Naive thymus-derived CD8-positive, alpha-beta T cell (primary cell): ENCODE measurements at regions of chr10 and their contacts with region 1.

Region 1: GRCh38 chr10:102450194-102450938 is 977 bp downstream of the C10orf95 start:
- DNase-seq: peak; percentile 85 to 95 (median 88)
- ATAC-seq: peak; percentile 86 to 87
- H3K4me3 Mint-ChIP-seq: peak overlapping the region; percentile 89 to 97 (median 93)
- H3K27ac Mint-ChIP-seq: peak overlapping the region; percentile 79 to 98 (median 95)
- H3K4me1 Mint-ChIP-seq: peaks cover 10 to 32% (median 28%) of the 10 kb centered on the region in 4 donors
- H3K27me3 Mint-ChIP-seq: no peaks in the 10 kb centered on the region

Region 2: GRCh38 chr10:102394079-102394800 is 56.1 kb before region 1 on chr10:
- POLR2A ChIA-PET with region 1: interaction called, 81 read pairs
- DNase-seq: peak; percentile 96 to 100 (median 99)
- ATAC-seq: peak; percentile 77 to 80
- H3K4me3 Mint-ChIP-seq: peak overlapping the region; percentile 93 to 98 (median 96)
- H3K27ac Mint-ChIP-seq: peak overlapping the region; percentile 92 to 100 (median 100)
- H3K4me1 Mint-ChIP-seq: peaks cover 13 to 46% (median 41%) of the 10 kb centered on the region in 4 donors
- H3K27me3 Mint-ChIP-seq: no peaks in the 10 kb centered on the region

Region 3: GRCh38 chr10:102420810-102421644 is 29.3 kb before region 1 on chr10 and contains the start of gene FBXL15:
- POLR2A ChIA-PET with region 1: interaction called, 111 read pairs
- DNase-seq: peak; percentile 77 to 97 (median 90)
- ATAC-seq: peak; percentile 71 to 76
- H3K4me3 Mint-ChIP-seq: peak within 1 kb of the TSS; percentile 93 to 100 (median 98)
- H3K27ac Mint-ChIP-seq: peak within 1 kb of the TSS; percentile 92 to 97 (median 95)
- H3K4me1 Mint-ChIP-seq: peaks cover 23 to 48% (median 46%) of the 10 kb centered on the region in 4 donors
- H3K27me3 Mint-ChIP-seq: peaks cover 11 to 25% (median 16%) of the 10 kb centered on the region in 5 donors
- polyA plus RNA-seq, gene FBXL15: 26.8 to 35.5 (median 28.5) TPM

Region 4: GRCh38 chr10:102461187-102462054 is 11.1 kb after region 1 on chr10:
- POLR2A ChIA-PET with region 1: interaction called, 109 read pairs
- DNase-seq: peak; percentile 85 to 95 (median 90)
- ATAC-seq: peak; percentile 99 to 100
- H3K4me3 Mint-ChIP-seq: peak overlapping the region; percentile 86 to 98 (median 92)
- H3K27ac Mint-ChIP-seq: peak overlapping the region; percentile 73 to 93 (median 86)
- H3K4me1 Mint-ChIP-seq: peaks cover 28 to 44% (median 32%) of the 10 kb centered on the region in 4 donors
- H3K27me3 Mint-ChIP-seq: peaks cover 0 to 1% (median 0%) of the 10 kb centered on the region in 5 donors

Region 5: DNA sequence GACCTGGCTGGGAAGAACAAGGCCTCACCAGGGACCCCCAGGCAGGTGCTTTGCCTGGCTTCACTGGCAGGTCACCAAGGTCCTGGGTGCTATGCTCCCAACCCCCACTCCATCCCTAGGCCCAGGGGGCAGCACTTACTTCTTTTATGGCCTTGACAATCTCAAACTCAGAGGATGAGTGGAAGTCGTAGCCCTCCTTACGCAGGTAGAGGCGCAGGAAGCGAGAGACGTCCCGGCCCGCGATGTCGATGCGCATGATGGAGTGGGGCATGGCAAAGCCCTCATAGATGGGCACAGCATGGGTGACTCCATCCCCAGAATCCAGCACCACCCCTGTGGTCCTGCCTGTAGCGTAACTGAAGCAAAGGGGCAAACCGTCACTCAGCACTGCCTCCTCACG is 33.7 kb after region 1 on chr10:
- POLR2A ChIA-PET with region 1: interaction called, 18 read pairs
- DNase-seq: no peak
- ATAC-seq: no peak
- H3K4me3 Mint-ChIP-seq: no peak overlapping the region
- H3K27ac Mint-ChIP-seq: no peak overlapping the region
- H3K4me1 Mint-ChIP-seq: peaks cover 1 to 3% (median 2%) of the 10 kb centered on the region in 4 donors
- H3K27me3 Mint-ChIP-seq: no peaks in the 10 kb centered on the region

Region 6: DNA sequence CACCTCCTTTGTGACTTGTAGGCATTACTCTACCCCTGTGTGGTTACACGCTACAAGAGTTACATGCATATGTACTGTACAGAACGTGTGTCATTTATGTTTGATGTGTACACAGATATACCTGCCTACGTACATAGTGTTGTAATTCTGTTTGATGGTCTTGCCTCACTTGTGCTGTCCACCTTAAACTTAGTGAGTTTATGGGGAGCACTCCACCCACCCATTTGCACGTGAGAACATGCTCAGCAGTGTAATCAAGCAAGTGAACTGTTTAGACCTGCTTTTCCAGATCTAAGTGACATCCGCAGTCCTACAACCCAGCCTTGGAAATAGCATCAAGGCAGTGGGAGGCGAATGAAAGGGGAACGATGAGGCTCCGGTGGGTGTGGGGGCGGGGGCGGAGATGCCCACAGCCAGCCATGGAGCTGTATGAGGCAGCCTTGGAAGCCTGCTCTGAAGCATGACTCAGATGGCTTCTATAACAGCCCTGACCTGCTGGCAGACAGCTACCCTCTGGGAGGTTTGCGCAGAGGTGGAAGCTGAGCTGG is 105.5 kb after region 1 on chr10:
- POLR2A ChIA-PET with region 1: no interaction called
- DNase-seq: no peak
- ATAC-seq: no peak
- H3K4me3 Mint-ChIP-seq: no peak overlapping the region
- H3K27ac Mint-ChIP-seq: peak overlapping the region in 2 of 10 donors; percentile 58 to 73
- H3K4me1 Mint-ChIP-seq: peaks cover 0 to 10% (median 5%) of the 10 kb centered on the region in 4 donors
- H3K27me3 Mint-ChIP-seq: no peaks in the 10 kb centered on the region

Region 7: GRCh38 chr10:102641880-102642735 is 191.7 kb after region 1 on chr10:
- POLR2A ChIA-PET with region 1: interaction called, 26 read pairs
- DNase-seq: peak; percentile 89 to 99 (median 96)
- ATAC-seq: peak; percentile 57 to 75
- H3K4me3 Mint-ChIP-seq: peak overlapping the region; percentile 84 to 98 (median 92)
- H3K27ac Mint-ChIP-seq: peak overlapping the region; percentile 87 to 98 (median 96)
- H3K4me1 Mint-ChIP-seq: peaks cover 15 to 20% (median 17%) of the 10 kb centered on the region in 4 donors
- H3K27me3 Mint-ChIP-seq: no peaks in the 10 kb centered on the region